ENCODE measurements at regions of chr10 and their contacts with region 1.

Region 1: GRCh38 chr10:14500172-14500765 is 169.5 kb upstream of the FRMD4A start:
- DNase-seq: no peak
- H3K4me3 ChIP-seq: no peak overlapping the region
- H3K27ac ChIP-seq: no peak overlapping the region
- H3K27me3 ChIP-seq: no peaks in the 10 kb centered on the region
- CTCF ChIP-seq: no peak

Region 2: GRCh38 chr10:14532473-14533251 is 32.4 kb after region 1 on chr10:
- intact Hi-C with region 1: loop called in 1 of 2 experiments (anchors 5 kb)
- DNase-seq: no peak
- H3K4me3 ChIP-seq: peak overlapping the region in 1 of 59 donors; percentile 4
- H3K27ac ChIP-seq: peak overlapping the region in 6 of 59 donors; percentile 16 to 45 (median 24)
- H3K27me3 ChIP-seq: no peaks in the 10 kb centered on the region
- CTCF ChIP-seq: no peak

Region 3: DNA sequence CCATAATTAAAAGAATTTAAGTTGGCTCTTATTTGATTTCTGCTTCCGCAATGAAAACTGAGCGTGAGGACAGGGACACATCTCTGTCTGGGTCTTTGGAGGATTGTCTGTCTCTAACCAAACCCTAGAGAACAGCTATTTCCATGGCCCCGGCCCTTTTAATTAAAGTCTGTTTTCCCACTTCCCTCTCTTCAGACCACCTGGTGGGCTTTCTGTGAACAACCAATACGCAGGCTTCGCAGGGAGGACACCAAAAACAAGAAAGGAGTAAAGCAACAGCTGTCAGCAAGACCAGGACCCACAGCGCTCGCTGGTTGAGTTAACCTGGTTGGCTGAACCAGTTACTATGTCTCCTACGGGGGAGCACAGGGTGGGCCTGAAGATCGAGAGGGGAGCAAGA is 47.5 kb after region 1 on chr10:
- intact Hi-C with region 1: loop called in 1 of 2 experiments (anchors 5 kb)
- DNase-seq: no peak
- H3K4me3 ChIP-seq: no peak overlapping the region
- H3K27ac ChIP-seq: peak overlapping the region in 24 of 59 donors; percentile 1 to 100 (median 48)
- H3K27me3 ChIP-seq: no peaks in the 10 kb centered on the region
- CTCF ChIP-seq: peak in 8 of 56 donors; percentile 10 to 27 (median 16)

Region 4: GRCh38 chr10:14556285-14556956 is 56.2 kb after region 1 on chr10:
- intact Hi-C with region 1: loop called in 1 of 2 experiments (anchors 5 kb)
- DNase-seq: no peak
- H3K4me3 ChIP-seq: peak overlapping the region in 5 of 59 donors; percentile 0 to 8 (median 3)
- H3K27ac ChIP-seq: peak overlapping the region in 51 of 59 donors; percentile 6 to 100 (median 78)
- H3K27me3 ChIP-seq: no peaks in the 10 kb centered on the region
- CTCF ChIP-seq: peak in 46 of 56 donors; percentile 8 to 66 (median 38)

Region 5: GRCh38 chr10:14635043-14635710 is 134.9 kb after region 1 on chr10:
- intact Hi-C with region 1: no loop called
- DNase-seq: no peak
- H3K4me3 ChIP-seq: no peak overlapping the region
- H3K27ac ChIP-seq: no peak overlapping the region
- H3K27me3 ChIP-seq: peaks cover 0 to 6% (median 0%) of the 10 kb centered on the region in 45 donors
- CTCF ChIP-seq: no peak

Region 6: GRCh38 chr10:14822879-14823755 is 322.8 kb after region 1 on chr10:
- intact Hi-C with region 1: loop called (anchors 2 to 5 kb)
- DNase-seq: peak in 3 of 10 donors; percentile 35 to 55 (median 46)
- H3K4me3 ChIP-seq: no peak overlapping the region
- H3K27ac ChIP-seq: no peak overlapping the region
- H3K27me3 ChIP-seq: no peaks in the 10 kb centered on the region
- CTCF ChIP-seq: peak; percentile 34 to 82 (median 66)